Naive thymus-derived CD4-positive, alpha-beta T cell (primary cell): ENCODE measurements at regions of chr15 and their contacts with region 1.

Region 1: DNA sequence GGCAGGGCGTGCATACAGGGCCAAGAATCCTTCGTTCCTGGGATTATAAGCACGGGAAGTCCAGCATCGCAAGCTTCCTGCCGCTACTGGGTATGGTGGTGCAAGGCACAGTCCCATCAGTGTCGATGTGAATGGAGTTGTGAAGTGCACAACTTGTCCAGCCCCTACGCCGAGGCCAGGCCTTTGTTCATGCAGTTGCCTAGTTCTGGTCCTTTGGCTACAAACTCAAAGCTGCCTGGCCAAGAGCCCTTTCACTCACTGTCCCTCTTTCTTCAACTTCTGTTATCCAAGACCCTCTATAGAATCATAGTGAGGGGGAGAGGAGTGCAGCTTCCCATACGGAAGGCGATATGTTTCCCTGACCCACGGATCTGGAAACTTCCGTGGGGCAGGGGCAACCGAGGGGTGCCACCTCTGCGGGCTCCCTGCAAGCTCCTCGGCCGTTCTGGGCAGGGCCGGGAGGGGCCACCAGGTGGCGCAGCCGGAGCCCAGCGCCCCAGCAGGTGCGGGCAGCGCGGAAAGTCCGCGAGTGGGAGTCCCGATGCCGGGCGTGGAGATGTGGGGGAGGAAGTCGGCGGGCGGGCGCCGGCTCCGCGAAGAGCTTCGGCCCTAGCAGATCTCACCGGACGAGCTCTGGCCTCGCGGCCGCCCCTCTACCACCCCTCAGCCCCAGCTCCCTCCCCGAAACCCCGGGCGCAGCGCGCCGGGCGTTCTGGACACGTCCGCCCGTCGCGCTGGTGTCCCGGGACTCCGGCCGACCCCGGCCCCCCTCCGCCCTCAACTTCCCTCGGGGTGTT is 693 bp downstream of the RASGRP1 start:
- DNase-seq: peak; percentile 75 to 95 (median 86)
- ATAC-seq: peak; percentile 85
- H3K4me3 ChIP-seq: peak overlapping the region; percentile 98
- H3K4me3 Mint-ChIP-seq: peak overlapping the region; percentile 80 to 99 (median 95)
- H3K27ac ChIP-seq: peak overlapping the region; percentile 91
- H3K27ac Mint-ChIP-seq: peak overlapping the region; percentile 87 to 99 (median 94)
- H3K4me1 ChIP-seq: peaks cover 51 to 60% of the 10 kb centered on the region in 2 donors
- H3K4me1 Mint-ChIP-seq: peaks cover 36 to 67% (median 64%) of the 10 kb centered on the region in 7 donors
- H3K27me3 ChIP-seq: no peaks in the 10 kb centered on the region
- H3K27me3 Mint-ChIP-seq: no peaks in the 10 kb centered on the region

Region 2: GRCh38 chr15:38406436-38406835 is 157.5 kb before region 1 on chr15:
- CTCF ChIA-PET with region 1: no interaction called
- POLR2A ChIA-PET with region 1: no interaction called
- intact Hi-C with region 1: no loop called
- DNase-seq: no peak
- ATAC-seq: no peak
- H3K4me3 ChIP-seq: no peak overlapping the region
- H3K4me3 Mint-ChIP-seq: no peak overlapping the region
- H3K27ac ChIP-seq: no peak overlapping the region
- H3K27ac Mint-ChIP-seq: no peak overlapping the region
- H3K4me1 ChIP-seq: no peaks in the 10 kb centered on the region
- H3K4me1 Mint-ChIP-seq: no peaks in the 10 kb centered on the region
- H3K27me3 ChIP-seq: peaks cover 0 to 5% of the 10 kb centered on the region in 2 donors
- H3K27me3 Mint-ChIP-seq: peaks cover 8 to 33% (median 23%) of the 10 kb centered on the region in 5 donors

Region 3: GRCh38 chr15:38521316-38521715 is 42.6 kb before region 1 on chr15:
- CTCF ChIA-PET with region 1: interaction called, 6 read pairs
- POLR2A ChIA-PET with region 1: interaction called, 3 read pairs
- intact Hi-C with region 1: loop called in 1 of 2 experiments (anchors 5 kb)
- DNase-seq: no peak
- ATAC-seq: no peak
- H3K4me3 ChIP-seq: no peak overlapping the region
- H3K4me3 Mint-ChIP-seq: no peak overlapping the region
- H3K27ac ChIP-seq: peak overlapping the region; percentile 19
- H3K27ac Mint-ChIP-seq: peak overlapping the region; percentile 34 to 91 (median 82)
- H3K4me1 ChIP-seq: peaks cover 0 to 7% of the 10 kb centered on the region in 2 donors
- H3K4me1 Mint-ChIP-seq: peaks cover 22 to 63% (median 57%) of the 10 kb centered on the region in 7 donors
- H3K27me3 ChIP-seq: no peaks in the 10 kb centered on the region
- H3K27me3 Mint-ChIP-seq: no peaks in the 10 kb centered on the region

Region 4: DNA sequence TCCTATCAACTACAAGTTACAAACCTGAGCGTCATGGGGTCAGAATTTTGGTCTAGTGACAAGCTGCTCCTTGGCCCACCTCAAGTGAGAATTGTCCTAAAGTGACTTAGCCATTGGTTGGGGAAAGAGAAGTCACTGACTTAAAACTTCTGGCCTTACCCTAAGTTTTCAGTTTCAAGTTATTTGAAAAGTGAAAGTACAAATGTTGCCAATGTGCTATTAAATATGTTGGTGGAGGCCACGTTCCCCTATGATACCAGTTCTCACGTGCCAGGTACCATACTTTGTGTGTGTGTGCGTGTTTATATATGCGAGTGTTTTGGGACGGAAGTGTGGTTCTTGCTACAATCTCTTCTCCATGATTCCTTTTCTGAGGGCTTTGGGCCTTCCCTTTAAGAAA is 23.3 kb after region 1 on chr15:
- CTCF ChIA-PET with region 1: interaction called, 5 read pairs
- POLR2A ChIA-PET with region 1: interaction called, 5 read pairs
- intact Hi-C with region 1: loop called in 1 of 2 experiments (anchors 2 kb)
- DNase-seq: peak in 2 of 9 donors; percentile 14 to 16
- ATAC-seq: no peak
- H3K4me3 ChIP-seq: peak overlapping the region; percentile 4
- H3K4me3 Mint-ChIP-seq: peak overlapping the region in 8 of 10 donors; percentile 2 to 62 (median 49)
- H3K27ac ChIP-seq: no peak overlapping the region
- H3K27ac Mint-ChIP-seq: peak overlapping the region; percentile 62 to 92 (median 82)
- H3K4me1 ChIP-seq: peaks cover 4 to 13% of the 10 kb centered on the region in 2 donors
- H3K4me1 Mint-ChIP-seq: peaks cover 0 to 35% (median 30%) of the 10 kb centered on the region in 7 donors
- H3K27me3 ChIP-seq: no peaks in the 10 kb centered on the region
- H3K27me3 Mint-ChIP-seq: peaks cover 0 to 4% (median 0%) of the 10 kb centered on the region in 5 donors

Region 5: GRCh38 chr15:38652998-38653397 is 89.1 kb after region 1 on chr15:
- CTCF ChIA-PET with region 1: interaction called, 77 read pairs
- POLR2A ChIA-PET with region 1: interaction called, 245 read pairs
- intact Hi-C with region 1: loop called (anchors 1 kb)
- DNase-seq: peak; percentile 22 to 94 (median 93)
- ATAC-seq: peak; percentile 86
- H3K4me3 ChIP-seq: peak overlapping the region; percentile 45
- H3K4me3 Mint-ChIP-seq: peak overlapping the region; percentile 79 to 92 (median 84)
- H3K27ac ChIP-seq: peak overlapping the region; percentile 70
- H3K27ac Mint-ChIP-seq: peak overlapping the region; percentile 93 to 99 (median 96)
- H3K4me1 ChIP-seq: peaks cover 57 to 70% of the 10 kb centered on the region in 2 donors
- H3K4me1 Mint-ChIP-seq: peaks cover 41 to 93% (median 89%) of the 10 kb centered on the region in 7 donors
- H3K27me3 ChIP-seq: no peaks in the 10 kb centered on the region
- H3K27me3 Mint-ChIP-seq: no peaks in the 10 kb centered on the region

Region 6: GRCh38 chr15:38683382-38684242 is 119.7 kb after region 1 on chr15:
- CTCF ChIA-PET with region 1: interaction called, 295 read pairs
- POLR2A ChIA-PET with region 1: interaction called, 260 read pairs
- intact Hi-C with region 1: loop called (anchors 1 kb)
- DNase-seq: peak; percentile 43 to 79 (median 71)
- ATAC-seq: peak; percentile 76
- H3K4me3 ChIP-seq: peak overlapping the region; percentile 22
- H3K4me3 Mint-ChIP-seq: peak overlapping the region; percentile 1 to 76 (median 55)
- H3K27ac ChIP-seq: peak overlapping the region; percentile 74
- H3K27ac Mint-ChIP-seq: peak overlapping the region; percentile 83 to 99 (median 95)
- H3K4me1 ChIP-seq: peaks cover 62 to 63% of the 10 kb centered on the region in 2 donors
- H3K4me1 Mint-ChIP-seq: peaks cover 53 to 90% (median 84%) of the 10 kb centered on the region in 7 donors
- H3K27me3 ChIP-seq: no peaks in the 10 kb centered on the region
- H3K27me3 Mint-ChIP-seq: no peaks in the 10 kb centered on the region

Region 7: DNA sequence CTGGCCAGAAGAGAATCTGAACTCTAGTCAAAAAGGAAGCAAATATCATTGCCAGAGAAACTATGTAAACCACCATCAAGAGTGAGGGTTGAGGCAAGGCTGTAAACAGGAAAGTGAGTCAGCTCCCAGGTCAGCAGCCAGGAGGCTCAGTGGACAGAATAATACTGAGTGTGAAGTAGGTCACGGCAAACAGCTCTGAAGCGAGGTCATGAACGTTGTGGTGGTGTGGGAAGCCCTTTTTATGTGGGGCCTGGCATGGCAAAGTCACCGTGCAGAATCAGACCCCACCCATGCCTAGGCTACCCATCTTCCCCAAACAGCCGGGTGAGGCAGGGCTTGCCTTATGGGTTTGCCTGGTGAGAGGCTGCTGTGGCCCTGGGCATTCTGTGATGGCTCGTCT is 1060.9 kb after region 1 on chr15:
- CTCF ChIA-PET with region 1: no interaction called
- POLR2A ChIA-PET with region 1: no interaction called
- intact Hi-C with region 1: loop called in 1 of 2 experiments (anchors 10 kb)
- DNase-seq: peak in 1 of 9 donors; percentile 63
- ATAC-seq: peak; percentile 77
- H3K4me3 ChIP-seq: no peak overlapping the region
- H3K4me3 Mint-ChIP-seq: peak overlapping the region in 2 of 10 donors; percentile 70 to 83
- H3K27ac ChIP-seq: no peak overlapping the region
- H3K27ac Mint-ChIP-seq: peak overlapping the region in 6 of 9 donors; percentile 28 to 100 (median 78)
- H3K4me1 ChIP-seq: peaks cover 15 to 80% of the 10 kb centered on the region in 2 donors
- H3K4me1 Mint-ChIP-seq: peaks cover 28 to 84% (median 33%) of the 10 kb centered on the region in 7 donors
- H3K27me3 ChIP-seq: no peaks in the 10 kb centered on the region
- H3K27me3 Mint-ChIP-seq: peaks cover 0 to 3% (median under 1%) of the 10 kb centered on the region in 5 donors